Mammary epithelial cell (primary cell): ENCODE measurements at regions of chr1 and their contacts with region 1.

Region 1: GRCh38 chr1:184903111-184903692 is 71.1 kb downstream of the NIBAN1 start:
- DNase-seq: no peak
- H3K4me3 ChIP-seq: no peak overlapping the region
- H3K27ac ChIP-seq: no peak overlapping the region
- H3K4me1 ChIP-seq: no peaks in the 10 kb centered on the region
- H3K27me3 ChIP-seq: no peaks in the 10 kb centered on the region
- CTCF ChIP-seq: no peak

Region 2: DNA sequence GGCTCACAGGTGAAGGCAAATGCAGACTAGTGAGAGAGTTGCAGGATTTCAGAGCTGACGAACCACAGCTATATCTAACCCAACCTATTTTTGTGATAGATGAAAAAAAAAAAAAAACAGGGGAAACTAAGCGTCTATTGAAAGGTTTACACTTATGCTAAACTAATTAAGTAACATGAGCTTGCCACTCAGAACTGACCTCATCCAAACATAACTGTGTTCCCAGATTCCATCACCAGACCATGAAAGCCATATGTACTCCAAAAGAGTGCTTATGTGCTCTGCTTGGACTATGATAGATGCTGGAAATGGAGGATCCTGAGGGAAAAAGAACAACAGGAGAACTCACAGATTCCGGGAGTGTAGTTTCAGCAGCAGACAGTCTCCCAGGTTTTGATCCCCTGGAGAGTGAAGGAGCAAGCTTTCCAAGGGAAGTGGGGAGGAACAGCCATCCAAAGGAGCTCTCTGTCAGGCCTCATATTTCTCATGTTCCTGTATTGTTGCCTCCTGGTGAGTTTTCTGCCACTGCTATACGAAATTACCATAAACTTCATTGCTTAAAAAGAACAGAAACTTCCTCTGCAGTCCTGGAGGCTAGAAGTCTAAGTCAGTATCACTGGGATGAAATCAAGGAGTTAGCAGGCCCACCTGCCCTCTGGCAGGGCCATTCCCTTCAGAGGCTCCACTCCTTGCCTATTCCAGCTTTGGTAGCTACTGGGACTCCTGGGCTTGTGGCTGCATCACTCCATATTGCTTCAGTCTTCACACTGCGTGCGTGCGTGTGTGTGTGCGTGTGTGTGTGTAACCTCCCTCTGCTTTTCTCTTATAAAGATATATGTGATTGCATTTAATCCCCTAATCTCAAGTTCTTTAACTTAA is 33.0 kb after region 1 on chr1:
- CTCF ChIA-PET with region 1: no interaction called
- dilution Hi-C with region 1: loop called (anchors 5 kb)
- in situ Hi-C with region 1: no loop called
- intact Hi-C with region 1: no loop called
- DNase-seq: no peak
- H3K4me3 ChIP-seq: no peak overlapping the region
- H3K27ac ChIP-seq: no peak overlapping the region
- H3K4me1 ChIP-seq: no peaks in the 10 kb centered on the region
- H3K27me3 ChIP-seq: no peaks in the 10 kb centered on the region
- CTCF ChIP-seq: no peak